A673 (cell line): ENCODE measurements at regions of chr4 and their contacts with region 1.

Region 1: DNA sequence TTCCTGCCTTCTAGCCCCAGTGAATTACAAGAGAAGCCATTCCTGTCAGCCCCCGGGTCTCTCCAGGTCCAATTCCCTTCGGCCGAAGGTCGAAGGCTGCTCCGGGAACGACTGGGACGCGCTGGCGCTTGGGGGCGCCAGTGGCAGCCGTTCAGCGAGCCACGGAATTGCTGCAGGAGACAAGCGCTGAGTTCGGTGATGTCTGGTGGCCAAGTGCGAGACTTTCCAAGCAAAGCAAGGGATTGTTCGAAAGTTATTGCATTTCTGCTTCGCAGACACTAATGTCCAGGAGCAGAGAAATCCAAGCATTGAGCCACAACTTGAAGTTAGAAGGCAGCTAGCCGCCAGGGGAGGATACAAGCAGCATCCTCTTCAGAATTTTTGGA is 1.1 kb upstream of the DKK2 start:
- DNase-seq: peak; percentile 87
- H3K4me3 ChIP-seq: peak overlapping the region; percentile 82
- H3K27ac ChIP-seq: peak overlapping the region; percentile 84
- H3K4me1 ChIP-seq: peaks cover 6% of the 10 kb centered on the region
- H3K27me3 ChIP-seq: no peaks in the 10 kb centered on the region
- CTCF ChIP-seq: peak; percentile 95

Region 2: DNA sequence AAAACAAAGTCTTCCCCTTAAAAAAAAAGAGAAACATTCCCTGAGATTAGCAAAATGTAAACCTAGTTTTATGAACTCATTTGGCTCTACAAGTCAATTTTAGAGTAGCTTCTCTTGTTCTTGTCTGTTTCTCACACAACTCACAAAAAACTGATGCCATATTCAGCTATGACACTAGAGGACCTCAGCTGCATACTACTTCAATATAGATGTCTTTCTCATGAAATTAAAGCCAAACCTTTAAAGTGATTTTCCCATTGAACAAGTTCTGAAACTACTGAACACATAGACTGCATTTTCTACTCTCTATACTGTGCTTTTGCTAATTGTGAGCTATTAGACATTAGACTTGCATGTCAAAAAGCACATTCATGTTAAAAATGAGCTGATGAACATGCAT is 771.0 kb before region 1 on chr4:
- CTCF ChIA-PET with region 1: interaction called, 4 read pairs
- POLR2A ChIA-PET with region 1: no interaction called
- intact Hi-C with region 1: loop called (anchors 2 kb)
- DNase-seq: peak; percentile 79
- H3K4me3 ChIP-seq: no peak overlapping the region
- H3K27ac ChIP-seq: no peak overlapping the region
- H3K4me1 ChIP-seq: peaks cover 13% of the 10 kb centered on the region
- H3K27me3 ChIP-seq: no peaks in the 10 kb centered on the region
- CTCF ChIP-seq: peak; percentile 72

Region 3: GRCh38 chr4:106426069-106426468 is 611.1 kb before region 1 on chr4:
- CTCF ChIA-PET with region 1: no interaction called
- POLR2A ChIA-PET with region 1: no interaction called
- intact Hi-C with region 1: no loop called
- DNase-seq: no peak
- H3K4me3 ChIP-seq: no peak overlapping the region
- H3K27ac ChIP-seq: no peak overlapping the region
- H3K4me1 ChIP-seq: no peaks in the 10 kb centered on the region
- H3K27me3 ChIP-seq: no peaks in the 10 kb centered on the region
- CTCF ChIP-seq: no peak

Region 4: DNA sequence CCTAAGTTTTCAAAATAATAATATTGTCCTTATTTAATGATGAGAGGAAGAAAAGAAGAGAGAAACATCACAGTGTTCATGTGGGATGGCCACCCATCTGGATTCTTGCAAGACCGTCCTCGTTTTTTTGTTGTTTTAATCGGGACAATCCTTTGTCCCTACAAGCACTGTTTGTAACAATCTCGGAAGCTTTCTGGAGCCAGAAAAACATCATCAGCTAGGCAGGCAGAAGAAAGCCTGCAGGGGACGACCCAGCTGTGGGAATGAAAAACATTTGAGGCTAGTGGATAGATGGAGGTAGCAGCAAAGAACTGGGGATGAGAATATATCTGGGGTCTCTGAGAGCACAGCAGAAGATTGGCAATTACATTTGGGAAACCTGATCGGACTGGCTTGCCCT is 106.7 kb before region 1 on chr4:
- CTCF ChIA-PET with region 1: no interaction called
- POLR2A ChIA-PET with region 1: no interaction called
- intact Hi-C with region 1: no loop called
- DNase-seq: no peak
- H3K4me3 ChIP-seq: no peak overlapping the region
- H3K27ac ChIP-seq: no peak overlapping the region
- H3K4me1 ChIP-seq: peaks cover 27% of the 10 kb centered on the region
- H3K27me3 ChIP-seq: no peaks in the 10 kb centered on the region
- CTCF ChIP-seq: no peak

Region 5: DNA sequence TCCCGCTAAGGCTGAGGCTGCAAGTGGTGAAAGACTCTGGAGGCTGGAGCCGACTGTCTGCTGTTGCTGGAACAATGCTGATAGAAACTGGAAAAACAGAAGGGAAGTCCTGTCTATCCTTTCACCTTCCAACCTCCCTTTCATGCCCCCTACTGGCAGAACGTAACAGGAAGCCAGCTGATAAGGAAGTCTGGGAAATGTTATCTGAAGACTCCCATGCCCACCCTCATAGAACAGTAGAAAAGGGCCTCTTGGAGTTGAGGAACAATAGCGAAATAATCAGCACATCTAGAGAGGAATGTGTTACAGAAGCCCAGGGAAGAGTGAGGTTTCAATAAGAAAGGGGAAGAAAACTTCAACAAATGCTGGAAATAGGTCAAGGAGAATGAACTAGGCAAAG is 116.0 kb after region 1 on chr4:
- CTCF ChIA-PET with region 1: no interaction called
- POLR2A ChIA-PET with region 1: no interaction called
- intact Hi-C with region 1: loop called (anchors 2 kb)
- DNase-seq: peak; percentile 80
- H3K4me3 ChIP-seq: no peak overlapping the region
- H3K27ac ChIP-seq: peak overlapping the region; percentile 84
- H3K4me1 ChIP-seq: peaks cover 59% of the 10 kb centered on the region
- H3K27me3 ChIP-seq: no peaks in the 10 kb centered on the region
- CTCF ChIP-seq: peak; percentile 64

Region 6: GRCh38 chr4:107213880-107214279 is 176.7 kb after region 1 on chr4:
- CTCF ChIA-PET with region 1: no interaction called
- POLR2A ChIA-PET with region 1: interaction called, 11 read pairs
- intact Hi-C with region 1: no loop called
- DNase-seq: no peak
- H3K4me3 ChIP-seq: no peak overlapping the region
- H3K27ac ChIP-seq: no peak overlapping the region
- H3K4me1 ChIP-seq: peaks cover 20% of the 10 kb centered on the region
- H3K27me3 ChIP-seq: no peaks in the 10 kb centered on the region
- CTCF ChIP-seq: no peak

Region 7: GRCh38 chr4:107392951-107393350 is 355.8 kb after region 1 on chr4:
- CTCF ChIA-PET with region 1: no interaction called
- POLR2A ChIA-PET with region 1: interaction called, 6 read pairs
- intact Hi-C with region 1: loop called (anchors 5 kb)
- DNase-seq: peak; percentile 67
- H3K4me3 ChIP-seq: no peak overlapping the region
- H3K27ac ChIP-seq: peak overlapping the region; percentile 90
- H3K4me1 ChIP-seq: peaks cover 52% of the 10 kb centered on the region
- H3K27me3 ChIP-seq: no peaks in the 10 kb centered on the region
- CTCF ChIP-seq: no peak

Region 8: GRCh38 chr4:107666134-107666533 is 628.9 kb after region 1 on chr4:
- CTCF ChIA-PET with region 1: no interaction called
- POLR2A ChIA-PET with region 1: no interaction called
- intact Hi-C with region 1: loop called (anchors 10 kb)
- DNase-seq: peak; percentile 54
- H3K4me3 ChIP-seq: no peak overlapping the region
- H3K27ac ChIP-seq: no peak overlapping the region
- H3K4me1 ChIP-seq: peaks cover 9% of the 10 kb centered on the region
- H3K27me3 ChIP-seq: no peaks in the 10 kb centered on the region
- CTCF ChIP-seq: peak; percentile 52